Right cardiac atrium (tissue), 5 donors: ENCODE measurements at regions of chr1 and their contacts with region 1.

Region 1: DNA sequence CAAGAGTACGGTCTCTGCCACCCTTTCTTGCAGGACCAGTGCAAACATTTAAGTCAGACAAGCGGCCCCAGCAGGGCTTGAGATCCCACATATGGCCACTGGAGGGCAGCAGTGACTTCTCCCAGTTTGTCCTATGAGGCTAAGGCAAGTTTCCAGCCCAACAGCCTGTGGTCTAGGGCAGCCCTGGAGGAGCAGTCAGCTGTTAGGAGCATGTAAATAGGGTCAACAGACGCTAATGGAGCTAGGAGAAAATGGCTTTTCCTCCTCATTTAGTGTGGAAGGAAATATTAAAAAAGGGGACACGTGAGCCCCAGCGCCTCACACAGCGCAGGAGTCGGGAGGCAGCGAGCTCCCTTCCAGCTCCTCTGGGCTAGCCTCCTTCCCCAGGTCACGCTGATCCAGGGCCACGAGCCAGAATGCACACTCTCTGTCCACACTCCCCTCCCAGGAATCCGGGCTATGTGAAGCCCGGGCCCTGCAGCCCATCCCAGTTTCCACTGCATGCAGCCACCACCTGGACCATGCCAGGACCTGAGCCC is 95.6 kb downstream of the LAMC2 start:
- DNase-seq: peak; percentile 92 to 96 (median 95)
- ATAC-seq: peak; percentile 86 to 89
- H3K4me3 ChIP-seq: no peak overlapping the region
- H3K27ac ChIP-seq: peak overlapping the region; percentile 88
- H3K4me1 ChIP-seq: peaks cover 25% of the 10 kb centered on the region
- H3K27me3 ChIP-seq: no peaks in the 10 kb centered on the region

Region 2: GRCh38 chr1:183318433-183318832 is 36.8 kb after region 1 on chr1:
- intact Hi-C with region 1: loop called in 3 of 4 experiments (anchors 2 to 5 kb)
- DNase-seq: peak; percentile 84 to 93 (median 89)
- ATAC-seq: peak; percentile 97
- H3K4me3 ChIP-seq: no peak overlapping the region
- H3K27ac ChIP-seq: peak overlapping the region; percentile 82
- H3K4me1 ChIP-seq: peaks cover 11% of the 10 kb centered on the region
- H3K27me3 ChIP-seq: no peaks in the 10 kb centered on the region

Region 3: DNA sequence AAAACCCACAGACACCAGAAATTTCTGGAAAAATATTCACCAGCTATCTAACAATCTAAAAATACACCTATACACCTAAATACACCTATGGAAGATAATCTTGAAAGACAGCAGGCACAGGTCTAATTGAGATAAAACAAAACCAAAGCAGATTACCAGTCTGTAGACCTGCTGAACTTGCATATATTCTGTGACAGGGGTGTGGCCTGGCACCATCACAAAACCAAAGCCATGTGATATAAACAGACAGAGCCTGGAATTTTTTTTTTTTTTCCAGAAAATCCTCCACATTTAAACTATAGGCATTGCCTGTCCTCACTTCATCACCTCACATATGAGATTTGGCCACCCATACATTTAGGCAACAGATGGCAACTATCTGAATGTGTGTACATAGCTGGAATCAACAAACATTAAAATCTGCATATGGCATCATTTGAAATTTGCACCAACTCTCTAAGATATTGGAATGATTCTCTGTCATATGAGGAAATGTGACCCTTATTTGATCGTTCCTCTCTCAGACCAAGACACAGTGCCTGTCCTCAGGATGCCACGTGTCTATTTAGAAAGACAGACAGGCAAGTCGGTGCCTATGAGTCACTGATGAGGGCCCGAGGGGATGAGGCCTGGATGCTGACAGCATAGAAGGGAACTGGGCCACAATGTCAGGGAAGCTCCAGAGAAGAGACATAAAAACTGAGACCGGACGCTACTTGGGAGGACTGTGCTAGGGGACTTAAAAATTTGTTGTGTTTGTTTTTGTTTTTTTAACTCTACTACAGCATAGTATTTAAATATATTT is 103.9 kb after region 1 on chr1:
- intact Hi-C with region 1: no loop called
- DNase-seq: no peak
- ATAC-seq: no peak
- H3K4me3 ChIP-seq: no peak overlapping the region
- H3K27ac ChIP-seq: no peak overlapping the region
- H3K4me1 ChIP-seq: no peaks in the 10 kb centered on the region
- H3K27me3 ChIP-seq: no peaks in the 10 kb centered on the region

Region 4: DNA sequence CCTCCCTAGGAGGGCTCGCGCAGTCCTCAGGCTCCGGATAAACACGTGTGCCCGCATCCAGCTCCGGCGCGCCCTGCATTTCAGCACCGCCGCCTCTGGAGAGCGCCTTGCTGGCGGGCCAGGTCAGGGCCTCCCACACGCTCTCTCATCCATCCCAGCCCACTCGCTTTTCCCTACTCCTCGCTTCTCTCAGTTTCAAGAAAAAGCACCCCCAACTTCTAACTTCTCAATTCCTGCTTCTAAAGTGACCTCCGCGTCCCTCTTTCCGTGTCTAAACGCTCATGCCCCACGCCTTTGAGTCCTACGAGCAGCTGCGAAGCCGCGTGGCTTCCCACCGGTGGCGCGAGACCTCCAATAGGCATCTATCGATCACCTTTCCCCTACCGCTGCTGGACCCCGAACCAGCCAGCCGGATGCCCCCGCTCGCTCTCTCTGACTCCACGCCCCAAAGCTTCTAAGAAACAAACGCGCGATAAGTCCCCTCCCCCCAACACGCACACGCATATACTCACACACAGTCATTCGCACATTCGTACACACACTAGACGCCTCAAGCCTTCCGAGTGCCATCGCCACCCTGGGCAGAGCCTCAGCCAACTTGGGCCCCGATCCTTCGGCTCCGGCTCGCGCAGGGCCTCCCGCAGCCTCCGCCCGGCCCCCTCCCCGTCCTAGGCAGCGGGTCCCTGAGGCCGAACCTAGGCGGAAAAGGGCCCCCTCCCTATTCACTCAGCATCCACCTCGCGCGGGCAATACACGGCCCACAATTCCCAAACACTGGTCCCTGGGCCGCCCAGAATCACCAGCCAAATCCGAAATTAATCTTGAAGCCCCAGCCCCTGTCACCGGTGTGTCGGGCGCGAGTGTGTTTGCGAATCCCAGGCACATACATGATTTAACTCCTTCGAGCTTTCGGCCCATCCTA is 135.5 kb after region 1 on chr1:
- intact Hi-C with region 1: loop called in 2 of 4 experiments (anchors 10 kb)
- DNase-seq: peak; percentile 69 to 89 (median 89)
- ATAC-seq: peak; percentile 93 to 95
- H3K4me3 ChIP-seq: peak overlapping the region; percentile 54
- H3K27ac ChIP-seq: no peak overlapping the region
- H3K4me1 ChIP-seq: peaks cover 6% of the 10 kb centered on the region
- H3K27me3 ChIP-seq: no peaks in the 10 kb centered on the region